OCI-LY7 (cell line): ENCODE measurements at regions of chr9 and their contacts with region 1.

Region 1: GRCh38 chr9:110152704-110153374 is 55.1 kb downstream of the C9orf152 start:
- DNase-seq: peak; percentile 80
- H3K4me3 ChIP-seq: peak overlapping the region; percentile 79
- H3K27ac ChIP-seq: peak overlapping the region; percentile 97
- H3K4me1 ChIP-seq: peaks cover 85% of the 10 kb centered on the region
- CTCF ChIP-seq: peak; percentile 94

Region 2: GRCh38 chr9:109972026-109972882 is 180.6 kb before region 1 on chr9:
- CTCF ChIA-PET with region 1: interaction called, 7 read pairs
- POLR2A ChIA-PET with region 1: interaction called, 46 read pairs
- intact Hi-C with region 1: no loop called
- DNase-seq: peak; percentile 94
- H3K4me3 ChIP-seq: peak overlapping the region; percentile 37
- H3K27ac ChIP-seq: peak overlapping the region; percentile 98
- H3K4me1 ChIP-seq: peaks cover 100% of the 10 kb centered on the region
- CTCF ChIP-seq: peak; percentile 87

Region 3: GRCh38 chr9:110058304-110058953 is 94.4 kb before region 1 on chr9:
- CTCF ChIA-PET with region 1: interaction called, 3 read pairs
- POLR2A ChIA-PET with region 1: interaction called, 13 read pairs
- intact Hi-C with region 1: loop called (anchors 2 kb)
- DNase-seq: peak; percentile 70
- H3K4me3 ChIP-seq: peak overlapping the region; percentile 23
- H3K27ac ChIP-seq: peak overlapping the region; percentile 48
- H3K4me1 ChIP-seq: peaks cover 44% of the 10 kb centered on the region
- CTCF ChIP-seq: peak; percentile 89

Region 4: GRCh38 chr9:110110154-110110553 is 42.7 kb before region 1 on chr9:
- CTCF ChIA-PET with region 1: interaction called, 5 read pairs
- POLR2A ChIA-PET with region 1: interaction called, 31 read pairs
- intact Hi-C with region 1: no loop called
- DNase-seq: peak; percentile 72
- H3K4me3 ChIP-seq: peak overlapping the region; percentile 46
- H3K27ac ChIP-seq: peak overlapping the region; percentile 64
- H3K4me1 ChIP-seq: peaks cover 79% of the 10 kb centered on the region
- CTCF ChIP-seq: no peak